Activated naive CD4-positive, alpha-beta T cell treated with anti-CD3 and anti-CD28 coated beads for 36 hours (primary cell): ENCODE measurements at regions of chr3 and their contacts with region 1.

Region 1: GRCh38 chr3:97871801-97872524 is 50.2 kb downstream of the CRYBG3 start:
- DNase-seq: peak; percentile 58
- H3K4me3 Mint-ChIP-seq: no peak overlapping the region
- H3K27ac Mint-ChIP-seq: peak overlapping the region; percentile 67
- H3K4me1 Mint-ChIP-seq: peaks cover 16% of the 10 kb centered on the region
- H3K27me3 Mint-ChIP-seq: no peaks in the 10 kb centered on the region

Region 2: DNA sequence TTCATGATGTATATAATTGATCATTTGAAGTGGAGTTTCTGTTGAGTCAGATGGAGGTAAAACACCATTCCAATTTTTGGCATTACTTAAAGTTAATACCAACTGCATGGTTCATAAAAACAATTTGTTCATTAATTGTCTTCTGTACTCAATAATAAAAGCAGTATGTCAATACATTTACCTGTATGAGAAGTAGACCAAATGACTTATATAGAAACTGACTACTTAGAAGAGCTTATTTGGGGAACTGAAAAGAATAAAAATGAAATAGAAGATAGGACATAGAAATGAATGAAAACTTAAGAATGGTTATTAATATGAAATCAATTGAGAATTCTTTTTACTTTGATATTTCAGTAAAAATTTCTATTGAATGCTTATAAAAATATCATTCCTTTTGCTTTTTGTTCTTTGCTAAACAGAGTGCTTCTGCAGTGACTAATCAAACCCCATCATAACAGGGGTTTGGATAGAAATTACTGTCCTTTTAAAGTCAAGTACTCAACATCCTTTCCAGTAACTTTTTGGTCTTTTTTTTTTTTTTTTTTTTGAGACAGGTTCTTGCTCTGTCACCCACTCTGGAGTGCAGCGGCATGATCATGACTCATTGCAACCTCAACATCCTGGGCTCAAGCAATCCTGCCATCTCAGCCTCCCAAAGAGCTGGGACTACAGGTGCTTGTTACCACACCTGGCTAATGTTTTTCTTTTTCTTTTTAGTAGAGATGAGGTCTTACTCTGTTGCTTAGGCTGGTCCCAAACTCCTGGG is 56.6 kb before region 1 on chr3:
- CTCF ChIA-PET with region 1: no interaction called
- intact Hi-C with region 1: loop called (anchors 1 kb)
- DNase-seq: peak; percentile 77
- H3K4me3 Mint-ChIP-seq: no peak overlapping the region
- H3K27ac Mint-ChIP-seq: peak overlapping the region; percentile 66
- H3K4me1 Mint-ChIP-seq: peaks cover 13% of the 10 kb centered on the region
- H3K27me3 Mint-ChIP-seq: peaks cover 1% of the 10 kb centered on the region

Region 3: GRCh38 chr3:97821810-97822775 is 49.9 kb before region 1 on chr3 and contains the start of gene CRYBG3:
- CTCF ChIA-PET with region 1: no interaction called
- intact Hi-C with region 1: loop called (anchors 1 kb)
- DNase-seq: peak; percentile 82
- H3K4me3 Mint-ChIP-seq: peak within 1 kb of the TSS; percentile 95
- H3K27ac Mint-ChIP-seq: peak within 1 kb of the TSS; percentile 27
- H3K4me1 Mint-ChIP-seq: peaks cover 14% of the 10 kb centered on the region
- H3K27me3 Mint-ChIP-seq: peaks cover 16% of the 10 kb centered on the region
- total RNA-seq, gene CRYBG3: 1.3 to 1.7 TPM

Region 4: GRCh38 chr3:97981886-97982285 is 109.9 kb after region 1 on chr3:
- CTCF ChIA-PET with region 1: no interaction called
- intact Hi-C with region 1: loop called (anchors 5 kb)
- DNase-seq: peak; percentile 42
- H3K4me3 Mint-ChIP-seq: no peak overlapping the region
- H3K27ac Mint-ChIP-seq: peak overlapping the region; percentile 3
- H3K4me1 Mint-ChIP-seq: peaks cover 11% of the 10 kb centered on the region
- H3K27me3 Mint-ChIP-seq: no peaks in the 10 kb centered on the region

Region 5: DNA sequence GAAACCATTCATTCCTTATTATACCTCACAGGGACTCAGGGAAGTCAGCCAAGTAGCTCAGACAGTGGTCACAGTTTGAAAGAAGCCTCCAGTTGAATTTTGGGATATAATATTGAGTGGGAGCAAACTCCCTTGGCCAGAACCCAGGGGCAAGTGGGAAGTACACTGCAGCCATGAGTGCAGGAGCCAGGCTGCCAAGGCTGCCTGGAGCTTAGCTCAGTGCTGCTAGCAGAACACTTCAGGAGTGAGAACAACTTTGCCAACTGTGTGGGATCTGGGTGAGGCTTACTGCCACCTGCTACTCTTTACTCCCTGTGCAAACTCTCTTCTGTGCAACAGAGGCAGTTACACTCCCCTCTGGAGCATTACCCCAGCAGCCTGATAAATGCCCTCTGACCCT is 523.1 kb after region 1 on chr3:
- CTCF ChIA-PET with region 1: no interaction called
- intact Hi-C with region 1: no loop called
- DNase-seq: no peak
- H3K4me3 Mint-ChIP-seq: no peak overlapping the region
- H3K27ac Mint-ChIP-seq: no peak overlapping the region
- H3K4me1 Mint-ChIP-seq: no peaks in the 10 kb centered on the region
- H3K27me3 Mint-ChIP-seq: peaks cover 19% of the 10 kb centered on the region

Region 6: DNA sequence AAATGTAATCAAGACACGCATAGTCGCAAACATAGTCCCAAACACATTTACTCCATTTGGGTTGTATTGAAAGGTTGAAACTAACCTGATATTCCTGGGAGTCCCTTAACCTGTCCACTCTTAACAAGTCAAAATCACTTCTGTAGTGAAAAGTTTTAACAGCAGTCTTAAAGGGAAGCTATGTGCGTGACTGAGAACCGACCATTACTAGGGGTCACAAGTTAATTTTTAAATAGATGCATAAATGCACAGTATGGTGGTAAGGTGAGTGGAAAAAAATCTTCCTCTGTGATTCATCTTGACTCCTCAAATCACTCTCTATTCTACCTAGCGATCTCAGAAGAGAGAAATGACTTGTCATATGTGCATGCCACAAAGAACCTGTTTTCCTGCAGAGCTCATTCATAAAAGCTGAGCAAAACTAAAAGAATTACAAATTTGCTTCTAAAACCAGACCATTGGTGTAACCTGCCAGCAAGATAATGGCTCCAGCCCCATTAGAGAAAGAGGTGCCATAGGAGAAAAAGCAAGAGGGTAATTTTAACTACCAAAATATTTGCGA is 664.6 kb after region 1 on chr3:
- CTCF ChIA-PET with region 1: no interaction called
- intact Hi-C with region 1: loop called (anchors 10 kb)
- DNase-seq: peak; percentile 14
- H3K4me3 Mint-ChIP-seq: peak overlapping the region; percentile 21
- H3K27ac Mint-ChIP-seq: peak overlapping the region; percentile 50
- H3K4me1 Mint-ChIP-seq: peaks cover 24% of the 10 kb centered on the region
- H3K27me3 Mint-ChIP-seq: peaks cover 6% of the 10 kb centered on the region